ENCODE measurements at regions of chr10 and their contacts with region 1.

Region 1: GRCh38 chr10:123154092-123154921 is at the start of gene BUB3:
- DNase-seq: peak; percentile 96 to 98
- H3K4me3 ChIP-seq: peak within 1 kb of the TSS; percentile 61
- H3K4me3 Mint-ChIP-seq: peak within 1 kb of the TSS; percentile 92
- H3K27ac Mint-ChIP-seq: peak within 1 kb of the TSS; percentile 88
- H3K4me1 ChIP-seq: peaks cover 33% of the 10 kb centered on the region
- H3K4me1 Mint-ChIP-seq: peaks cover 24% of the 10 kb centered on the region
- H3K27me3 ChIP-seq: no peaks in the 10 kb centered on the region
- H3K27me3 Mint-ChIP-seq: no peaks in the 10 kb centered on the region
- CTCF ChIP-seq: no peak
- total RNA-seq, gene BUB3: 129 and 141 TPM in 2 replicates

Region 2: DNA sequence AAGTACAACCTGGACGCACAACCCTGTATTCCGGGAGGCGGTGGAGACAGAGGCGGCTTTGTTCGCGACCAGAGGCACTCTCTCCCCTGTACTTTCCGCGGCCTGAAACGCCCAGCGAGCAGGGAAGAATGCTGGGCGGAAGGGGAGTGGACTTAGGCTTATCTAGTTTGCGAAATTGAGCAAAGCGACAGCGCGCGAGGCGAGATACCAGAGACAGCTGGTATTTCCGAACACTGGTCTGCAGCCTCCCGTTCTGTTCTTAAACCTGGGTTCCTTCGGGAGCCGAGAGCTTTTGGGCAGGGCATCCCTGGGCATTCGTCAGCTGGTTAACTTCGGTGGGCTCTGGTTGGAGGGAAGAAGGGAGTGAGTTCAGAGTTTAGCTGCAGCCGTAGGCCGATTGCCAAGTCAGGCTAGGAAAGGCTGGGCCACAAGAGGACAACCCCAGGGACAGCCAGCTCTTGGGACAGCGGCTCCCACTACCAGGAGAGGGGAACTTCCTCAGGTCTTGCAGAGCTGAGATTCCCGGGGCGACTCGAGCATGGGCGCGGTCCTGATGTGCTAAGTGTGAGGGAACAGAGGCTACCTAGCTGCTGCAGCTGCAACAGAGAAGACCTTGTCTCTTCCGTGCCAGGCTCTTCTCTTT is 14.7 kb before region 1 on chr10:
- CTCF ChIA-PET with region 1: interaction called, 8 read pairs
- POLR2A ChIA-PET with region 1: interaction called, 3 read pairs
- intact Hi-C with region 1: loop called (anchors 1 kb)
- DNase-seq: peak; percentile 82 to 89
- H3K4me3 ChIP-seq: peak overlapping the region; percentile 24
- H3K4me3 Mint-ChIP-seq: peak overlapping the region; percentile 82
- H3K27ac Mint-ChIP-seq: no peak overlapping the region
- H3K4me1 ChIP-seq: peaks cover 16% of the 10 kb centered on the region
- H3K4me1 Mint-ChIP-seq: peaks cover 7% of the 10 kb centered on the region
- H3K27me3 ChIP-seq: peaks cover 6% of the 10 kb centered on the region
- H3K27me3 Mint-ChIP-seq: peaks cover 10% of the 10 kb centered on the region
- CTCF ChIP-seq: no peak

Region 3: GRCh38 chr10:124106241-124106879 is 952.1 kb after region 1 on chr10:
- CTCF ChIA-PET with region 1: no interaction called
- POLR2A ChIA-PET with region 1: no interaction called
- intact Hi-C with region 1: no loop called
- DNase-seq: no peak
- H3K4me3 ChIP-seq: no peak overlapping the region
- H3K4me3 Mint-ChIP-seq: no peak overlapping the region
- H3K27ac Mint-ChIP-seq: no peak overlapping the region
- H3K4me1 ChIP-seq: no peaks in the 10 kb centered on the region
- H3K4me1 Mint-ChIP-seq: no peaks in the 10 kb centered on the region
- H3K27me3 ChIP-seq: no peaks in the 10 kb centered on the region
- H3K27me3 Mint-ChIP-seq: peaks cover 6% of the 10 kb centered on the region
- CTCF ChIP-seq: no peak